ENCODE measurements at regions of chr6 and their contacts with region 1.

Region 1: DNA sequence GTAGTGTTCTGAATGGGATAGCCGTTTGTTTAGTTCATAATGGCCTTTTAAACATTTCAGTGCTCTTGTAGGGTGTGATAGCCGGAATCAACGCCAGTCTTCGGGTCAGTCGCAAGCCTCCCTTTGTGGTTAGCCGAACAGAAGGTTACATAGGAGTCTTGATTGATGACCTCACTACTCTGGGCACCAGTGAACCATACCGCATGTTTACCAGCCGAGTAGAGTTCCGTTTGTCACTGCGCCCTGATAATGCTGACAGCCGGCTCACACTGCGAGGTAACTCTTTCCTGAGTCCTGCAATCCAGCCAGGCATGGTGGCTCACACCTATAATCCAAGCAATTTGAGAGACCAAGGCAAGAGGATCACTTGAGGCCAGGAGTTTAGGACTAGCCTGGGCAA is 20.4 kb downstream of the MTO1 start:
- DNase-seq: no peak
- ATAC-seq: no peak
- H3K4me3 Mint-ChIP-seq: no peak overlapping the region
- H3K27ac Mint-ChIP-seq: no peak overlapping the region
- H3K4me1 Mint-ChIP-seq: no peaks in the 10 kb centered on the region
- H3K27me3 Mint-ChIP-seq: no peaks in the 10 kb centered on the region
- CTCF ChIP-seq: no peak

Region 2: DNA sequence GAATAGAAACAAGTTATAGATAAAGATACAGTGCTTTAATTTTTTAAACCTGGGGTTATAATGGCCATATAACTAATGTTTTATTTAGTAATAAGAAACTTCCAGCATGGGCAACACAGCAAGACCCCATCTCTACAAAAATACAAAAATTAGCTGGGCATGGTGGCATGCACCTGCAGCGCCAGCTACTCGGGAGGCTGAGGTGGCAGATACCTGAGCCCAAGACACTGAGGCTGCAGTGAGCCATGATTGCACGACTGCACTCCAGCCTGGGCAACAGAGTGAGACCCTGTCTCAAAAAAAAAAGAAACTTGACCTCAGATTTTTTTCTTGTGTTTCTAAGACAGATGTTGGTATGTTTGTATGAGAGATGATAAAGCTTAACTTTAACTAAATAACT is 15.9 kb after region 1 on chr6:
- CTCF ChIA-PET with region 1: no interaction called
- POLR2A ChIA-PET with region 1: no interaction called
- intact Hi-C with region 1: loop called (anchors 2 kb)
- DNase-seq: no peak
- ATAC-seq: no peak
- H3K4me3 Mint-ChIP-seq: no peak overlapping the region
- H3K27ac Mint-ChIP-seq: no peak overlapping the region
- H3K4me1 Mint-ChIP-seq: no peaks in the 10 kb centered on the region
- H3K27me3 Mint-ChIP-seq: no peaks in the 10 kb centered on the region
- CTCF ChIP-seq: no peak

Region 3: DNA sequence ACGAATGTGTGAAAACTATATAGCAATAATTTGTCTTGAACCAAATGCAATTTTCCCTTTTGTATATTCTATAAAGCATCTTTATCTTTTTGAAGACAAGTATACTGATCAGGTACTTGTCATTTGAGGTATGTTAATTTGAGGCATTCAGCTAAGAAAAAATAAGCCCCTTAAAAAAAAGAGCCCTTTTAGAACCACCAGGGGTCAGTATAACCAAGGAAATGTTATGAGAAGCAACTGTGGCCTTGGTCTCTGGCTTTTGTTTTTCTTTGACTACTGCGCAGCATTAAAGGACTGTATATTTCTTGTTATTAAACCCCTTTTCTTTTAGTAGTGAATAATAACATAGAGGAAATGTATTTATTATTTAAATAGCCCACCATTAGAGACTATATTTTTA is 257.1 kb after region 1 on chr6:
- CTCF ChIA-PET with region 1: no interaction called
- POLR2A ChIA-PET with region 1: no interaction called
- intact Hi-C with region 1: no loop called
- DNase-seq: no peak
- ATAC-seq: peak; percentile 71
- H3K4me3 Mint-ChIP-seq: no peak overlapping the region
- H3K27ac Mint-ChIP-seq: no peak overlapping the region
- H3K4me1 Mint-ChIP-seq: no peaks in the 10 kb centered on the region
- H3K27me3 Mint-ChIP-seq: peaks cover 3% of the 10 kb centered on the region
- CTCF ChIP-seq: no peak